Endothelial cell of umbilical vein (primary cell): ENCODE measurements at regions of chr3 and their contacts with region 1.

Region 1: DNA sequence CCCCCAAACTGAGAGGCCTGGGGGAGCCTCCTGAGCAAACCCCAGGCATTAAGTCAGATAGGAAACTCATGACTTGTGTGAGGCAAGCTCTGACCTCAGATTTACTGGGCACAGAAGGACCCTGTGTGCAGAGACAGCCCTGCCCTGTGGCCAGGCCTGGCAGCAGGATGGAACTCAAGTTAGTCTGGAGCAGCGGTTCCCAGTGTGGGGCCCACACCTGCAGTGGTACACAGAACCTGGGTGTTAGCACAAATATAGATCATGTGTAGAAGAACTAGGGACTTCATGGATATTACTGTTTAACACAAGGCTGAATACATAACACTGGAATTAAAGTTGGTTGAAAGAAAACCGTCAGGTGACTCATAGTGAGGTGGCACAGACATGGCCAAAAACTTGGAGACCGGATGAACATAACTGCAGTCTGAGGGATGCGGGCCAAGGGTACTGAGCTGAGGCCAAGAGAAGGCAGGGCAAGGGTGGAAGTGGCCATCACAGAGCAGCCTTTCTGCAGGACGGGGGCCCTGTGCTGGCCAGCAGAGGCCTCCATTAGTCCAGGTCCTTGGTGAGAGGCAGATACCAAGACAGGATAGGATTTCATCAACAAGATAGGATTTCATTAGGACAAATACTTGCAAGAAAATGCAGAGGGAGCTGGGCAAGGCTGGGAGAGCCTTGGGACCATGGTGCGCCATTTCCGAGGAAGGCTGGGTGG is 40.9 kb downstream of the IRAK2 start:
- DNase-seq: peak; percentile 93
- H3K4me3 ChIP-seq: no peak overlapping the region
- H3K27ac ChIP-seq: peak overlapping the region; percentile 94
- H3K4me1 ChIP-seq: peaks cover 44% of the 10 kb centered on the region
- H3K27me3 ChIP-seq: no peaks in the 10 kb centered on the region
- CTCF ChIP-seq: peak in 1 of 2 donors; percentile 3
- POLR2A ChIP-seq: peak; percentile 51

Region 2: GRCh38 chr3:10173926-10174435 is 31.6 kb before region 1 on chr3:
- CTCF ChIA-PET with region 1: interaction called, 3 read pairs
- POLR2A ChIA-PET with region 1: no interaction called
- dilution Hi-C with region 1: no loop called
- intact Hi-C with region 1: loop called (anchors 5 kb)
- DNase-seq: peak; percentile 98
- H3K4me3 ChIP-seq: no peak overlapping the region
- H3K27ac ChIP-seq: peak overlapping the region; percentile 84
- H3K4me1 ChIP-seq: peaks cover 14% of the 10 kb centered on the region
- H3K27me3 ChIP-seq: no peaks in the 10 kb centered on the region
- CTCF ChIP-seq: no peak
- POLR2A ChIP-seq: peak; percentile 46